Activated CD4-positive, alpha-beta memory T cell treated with anti-CD3 and anti-CD28 coated beads for 36 hours (primary cell): ENCODE measurements at regions of chr22 and their contacts with region 1.

Region 1: DNA sequence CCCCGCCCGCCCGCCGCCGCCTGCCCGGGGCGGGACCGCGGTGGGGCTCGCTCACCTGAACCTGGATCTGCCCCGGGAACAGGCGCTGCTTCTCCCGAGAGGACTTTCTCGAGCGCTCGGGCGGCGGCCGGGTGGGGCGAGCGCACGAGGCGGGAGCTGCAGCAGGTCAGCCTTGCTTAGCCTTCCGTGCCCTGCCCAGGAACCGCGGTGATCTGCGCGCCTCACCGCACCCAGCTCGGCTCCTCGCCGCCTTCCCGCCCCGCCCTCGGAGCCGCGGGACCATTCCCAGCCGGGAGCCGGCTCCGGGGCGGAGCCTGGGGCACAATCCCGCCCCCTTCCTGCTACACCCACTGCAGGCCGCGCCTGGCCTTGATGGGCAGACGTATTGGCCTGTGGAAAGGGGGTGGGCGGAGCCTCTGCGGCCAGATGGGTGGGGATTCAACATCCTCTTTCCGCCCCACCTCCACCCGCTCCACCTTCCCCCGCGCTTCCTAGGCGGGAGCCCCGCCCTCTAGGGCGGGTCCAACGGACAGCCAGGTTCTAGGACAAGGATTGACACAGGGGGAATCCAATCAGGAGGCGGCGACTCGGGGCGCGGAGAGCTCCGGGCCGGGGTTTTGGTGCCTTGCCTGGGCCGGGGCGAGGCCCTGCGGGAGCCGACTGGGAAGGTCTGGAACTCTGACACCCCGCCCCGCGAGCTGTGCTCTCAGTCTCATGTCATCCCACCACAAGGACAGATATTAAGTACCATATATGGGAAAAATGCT is at the start of gene MYH9:
- DNase-seq: peak; percentile 100
- H3K4me3 Mint-ChIP-seq: peak within 1 kb of the TSS; percentile 95
- H3K27ac Mint-ChIP-seq: peak within 1 kb of the TSS; percentile 97
- H3K4me1 Mint-ChIP-seq: peaks cover 32% of the 10 kb centered on the region
- H3K27me3 Mint-ChIP-seq: no peaks in the 10 kb centered on the region
- total RNA-seq, gene MYH9: 712 to 720 TPM

Region 2: GRCh38 chr22:36339171-36340065 is 48.5 kb before region 1 on chr22:
- CTCF ChIA-PET with region 1: interaction called, 6 read pairs
- POLR2A ChIA-PET with region 1: interaction called, 4 read pairs
- intact Hi-C with region 1: loop called (anchors 1 kb)
- DNase-seq: peak; percentile 67
- H3K4me3 Mint-ChIP-seq: peak overlapping the region; percentile 9
- H3K27ac Mint-ChIP-seq: peak overlapping the region; percentile 89
- H3K4me1 Mint-ChIP-seq: peaks cover 97% of the 10 kb centered on the region
- H3K27me3 Mint-ChIP-seq: no peaks in the 10 kb centered on the region

Region 3: GRCh38 chr22:36365020-36365411 is 22.9 kb before region 1 on chr22:
- CTCF ChIA-PET with region 1: interaction called, 34 read pairs
- POLR2A ChIA-PET with region 1: interaction called, 6 read pairs
- intact Hi-C with region 1: loop called (anchors 1 kb)
- DNase-seq: peak; percentile 95
- H3K4me3 Mint-ChIP-seq: peak overlapping the region; percentile 60
- H3K27ac Mint-ChIP-seq: peak overlapping the region; percentile 85
- H3K4me1 Mint-ChIP-seq: peaks cover 95% of the 10 kb centered on the region
- H3K27me3 Mint-ChIP-seq: no peaks in the 10 kb centered on the region

Region 4: DNA sequence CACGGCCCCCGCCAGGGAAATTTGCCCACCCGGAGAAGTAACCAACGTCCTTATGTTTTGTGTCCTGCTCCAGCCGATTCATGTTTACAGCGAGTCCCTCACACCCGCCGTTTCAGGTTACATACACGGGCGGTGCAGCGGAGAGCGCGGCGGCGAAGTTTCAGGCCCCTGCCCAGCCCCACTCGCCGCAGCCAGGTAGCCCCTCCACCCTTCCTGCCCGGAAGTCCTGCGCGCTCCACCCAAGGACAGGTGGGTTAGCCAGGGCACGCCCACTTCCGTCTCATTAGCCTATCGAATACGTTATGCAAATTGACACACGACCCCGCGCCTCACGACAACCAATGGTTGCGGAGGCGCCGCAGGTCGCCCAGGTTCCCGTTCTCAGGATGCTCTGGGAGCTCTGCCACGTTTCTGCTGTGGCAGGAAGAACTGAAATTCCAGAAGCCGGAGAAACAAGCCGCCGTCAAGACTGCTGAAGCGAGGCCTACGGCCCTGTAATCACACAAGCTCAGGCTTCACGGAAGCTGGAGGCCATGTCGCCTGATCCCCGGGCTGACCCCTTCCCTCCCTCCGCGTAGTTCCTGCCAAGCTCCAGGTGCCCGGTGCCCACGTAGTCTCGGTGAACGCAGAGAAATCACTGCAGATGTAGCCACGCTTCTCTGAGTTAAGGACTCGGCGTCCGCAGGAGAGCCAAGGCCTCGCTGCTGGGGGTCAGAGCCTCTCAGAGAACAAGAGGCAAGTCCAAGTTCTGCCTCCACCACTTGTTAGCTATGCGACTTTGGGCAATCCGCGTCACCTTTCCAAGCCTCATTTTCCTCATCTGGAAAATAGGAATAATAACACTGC is 22.2 kb after region 1 on chr22:
- CTCF ChIA-PET with region 1: no interaction called
- POLR2A ChIA-PET with region 1: interaction called, 4 read pairs
- intact Hi-C with region 1: loop called (anchors 1 kb)
- DNase-seq: peak; percentile 83
- H3K4me3 Mint-ChIP-seq: peak overlapping the region; percentile 76
- H3K27ac Mint-ChIP-seq: peak overlapping the region; percentile 66
- H3K4me1 Mint-ChIP-seq: peaks cover 37% of the 10 kb centered on the region
- H3K27me3 Mint-ChIP-seq: no peaks in the 10 kb centered on the region

Region 5: GRCh38 chr22:36481393-36482168 is 93.6 kb after region 1 on chr22 and contains the start of gene TXN2:
- CTCF ChIA-PET with region 1: interaction called, 5 read pairs
- POLR2A ChIA-PET with region 1: interaction called, 6 read pairs
- intact Hi-C with region 1: loop called (anchors 1 kb)
- DNase-seq: peak; percentile 96
- H3K4me3 Mint-ChIP-seq: peak within 1 kb of the TSS; percentile 100
- H3K27ac Mint-ChIP-seq: peak within 1 kb of the TSS; percentile 96
- H3K4me1 Mint-ChIP-seq: peaks cover 15% of the 10 kb centered on the region
- H3K27me3 Mint-ChIP-seq: no peaks in the 10 kb centered on the region
- total RNA-seq, gene TXN2: 94.3 to 97.0 TPM

Region 6: DNA sequence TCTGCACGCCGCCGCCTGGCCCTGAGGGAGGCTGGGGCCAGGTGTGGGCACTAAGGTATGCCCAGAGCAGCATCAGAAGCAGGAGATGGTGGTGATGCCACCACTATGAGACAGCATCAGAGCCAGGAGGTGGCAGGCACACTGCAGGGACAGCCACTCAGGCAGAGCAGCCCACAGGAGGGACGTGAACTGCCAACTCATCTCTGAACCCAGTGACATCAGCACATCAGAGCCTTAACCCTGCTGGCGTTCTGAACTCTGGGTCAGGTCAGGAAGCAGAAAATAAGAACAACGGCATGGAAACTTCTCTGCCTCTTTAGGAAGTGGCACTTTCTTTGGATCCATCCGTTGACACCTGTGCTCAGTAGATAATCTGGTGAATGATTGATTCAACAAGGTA is 402.7 kb after region 1 on chr22:
- CTCF ChIA-PET with region 1: no interaction called
- POLR2A ChIA-PET with region 1: no interaction called
- intact Hi-C with region 1: no loop called
- DNase-seq: peak; percentile 73
- H3K4me3 Mint-ChIP-seq: no peak overlapping the region
- H3K27ac Mint-ChIP-seq: no peak overlapping the region
- H3K4me1 Mint-ChIP-seq: peaks cover 7% of the 10 kb centered on the region
- H3K27me3 Mint-ChIP-seq: peaks cover 10% of the 10 kb centered on the region